Left ventricle myocardium inferior (tissue), 1 donor: ENCODE measurements at regions of chr2 and their contacts with region 1.

Region 1: DNA sequence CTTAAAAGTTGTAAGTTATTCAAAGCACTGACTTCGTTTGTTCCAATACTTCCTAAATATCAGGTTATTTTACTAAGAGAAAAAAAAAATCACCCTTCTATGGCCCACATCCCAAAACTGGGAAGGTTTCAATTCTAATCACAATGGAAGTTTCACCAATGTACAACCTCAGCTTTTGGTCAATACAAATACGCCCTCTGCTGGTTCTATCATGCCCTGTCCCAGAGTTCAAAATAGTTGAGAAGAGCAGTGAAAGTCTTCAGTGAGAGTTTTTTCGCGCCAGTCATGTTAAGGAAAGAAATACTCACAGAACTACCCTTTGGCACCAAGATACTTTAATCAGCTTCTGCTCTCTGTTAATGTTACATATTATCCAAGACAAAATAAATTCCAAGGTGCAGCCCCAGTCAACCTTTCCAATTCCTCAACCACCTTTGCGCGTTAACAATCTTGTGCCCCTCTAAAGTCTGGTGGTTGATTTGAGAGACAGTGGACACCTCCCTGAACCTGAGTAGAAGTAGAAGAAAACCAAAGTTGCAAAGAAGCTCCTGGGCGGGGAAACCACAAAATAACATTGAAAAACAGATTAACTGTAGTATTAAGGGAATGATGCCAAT is 59.9 kb downstream of the SUMO1 start:
- DNase-seq: no peak
- H3K4me3 ChIP-seq: no peak overlapping the region
- H3K27ac ChIP-seq: no peak overlapping the region
- H3K4me1 ChIP-seq: no peaks in the 10 kb centered on the region
- H3K27me3 ChIP-seq: no peaks in the 10 kb centered on the region
- CTCF ChIP-seq: peak; percentile 93

Region 2: GRCh38 chr2:201795607-201796477 is 382.6 kb before region 1 on chr2:
- intact Hi-C with region 1: loop called (anchors 5 kb)
- DNase-seq: no peak
- H3K4me3 ChIP-seq: no peak overlapping the region
- H3K27ac ChIP-seq: no peak overlapping the region
- H3K4me1 ChIP-seq: no peaks in the 10 kb centered on the region
- H3K27me3 ChIP-seq: peaks cover 2% of the 10 kb centered on the region
- CTCF ChIP-seq: peak; percentile 79

Region 3: DNA sequence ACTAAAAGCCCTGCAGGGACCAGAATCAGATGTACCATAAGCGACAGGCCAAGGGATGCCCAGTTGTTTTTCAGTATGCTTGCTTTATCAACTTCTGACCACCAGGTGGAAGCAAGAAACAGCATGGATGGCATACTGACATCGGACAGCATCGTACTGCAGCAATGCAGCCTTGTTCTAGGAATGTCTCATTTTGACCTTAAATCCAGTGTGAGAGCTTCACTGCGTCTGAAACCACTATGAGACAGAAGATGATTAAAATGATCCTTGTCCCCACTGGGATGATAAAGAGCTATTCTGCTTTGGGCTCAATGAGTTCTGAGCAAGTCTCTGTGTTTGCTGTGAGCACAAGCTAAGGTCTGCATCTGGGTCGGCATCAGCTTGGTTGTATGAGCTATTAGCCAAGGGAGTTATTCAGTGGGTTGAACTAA is 317.8 kb before region 1 on chr2:
- intact Hi-C with region 1: loop called (anchors 2 kb)
- DNase-seq: no peak
- H3K4me3 ChIP-seq: no peak overlapping the region
- H3K27ac ChIP-seq: no peak overlapping the region
- H3K4me1 ChIP-seq: peaks cover 4% of the 10 kb centered on the region
- H3K27me3 ChIP-seq: peaks cover 72% of the 10 kb centered on the region
- CTCF ChIP-seq: peak; percentile 86

Region 4: GRCh38 chr2:202265467-202266277 is 87.2 kb after region 1 on chr2 and contains the start of gene NOP58:
- intact Hi-C with region 1: no loop called
- DNase-seq: peak; percentile 87
- H3K4me3 ChIP-seq: peak within 1 kb of the TSS; percentile 94
- H3K27ac ChIP-seq: peak within 1 kb of the TSS; percentile 96
- H3K4me1 ChIP-seq: peaks cover 55% of the 10 kb centered on the region
- H3K27me3 ChIP-seq: no peaks in the 10 kb centered on the region
- CTCF ChIP-seq: no peak
- total RNA-seq, gene NOP58: 21.4 TPM

Region 5: GRCh38 chr2:202387608-202388342 is 209.3 kb after region 1 on chr2:
- intact Hi-C with region 1: no loop called
- DNase-seq: no peak
- H3K4me3 ChIP-seq: no peak overlapping the region
- H3K27ac ChIP-seq: no peak overlapping the region
- H3K4me1 ChIP-seq: peaks cover 56% of the 10 kb centered on the region
- H3K27me3 ChIP-seq: no peaks in the 10 kb centered on the region
- CTCF ChIP-seq: no peak